Ascending aorta (tissue), 2 donors: ENCODE measurements at regions of chr3 and their contacts with region 1.

Region 1: DNA sequence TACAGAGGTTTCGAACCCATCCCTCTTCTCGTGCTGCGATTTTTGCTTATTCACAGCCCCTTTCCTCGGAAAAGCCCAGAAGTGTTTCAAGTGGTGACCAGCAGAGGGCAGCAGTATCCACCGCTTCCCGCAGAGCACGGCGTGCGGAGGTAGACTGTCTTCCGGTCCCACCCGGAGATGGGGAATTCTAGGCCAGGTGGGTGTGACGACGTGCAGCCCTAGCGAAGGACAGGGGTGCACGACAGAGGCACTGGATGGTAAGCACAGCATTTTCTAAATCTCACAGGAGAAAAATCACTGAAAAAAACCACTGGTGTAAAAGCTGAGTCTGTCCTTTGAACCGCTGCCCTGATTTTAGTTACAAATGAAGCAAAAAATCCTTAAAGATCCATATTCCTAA is 7.4 kb upstream of the PSMD6 start:
- DNase-seq: peak in 1 of 2 donors; percentile 76
- H3K4me3 ChIP-seq: peak overlapping the region; percentile 41 to 53
- H3K27ac ChIP-seq: no peak overlapping the region
- H3K4me1 ChIP-seq: no peaks in the 10 kb centered on the region
- H3K27me3 ChIP-seq: no peaks in the 10 kb centered on the region
- CTCF ChIP-seq: peak; percentile 86 to 91 (median 87)

Region 2: DNA sequence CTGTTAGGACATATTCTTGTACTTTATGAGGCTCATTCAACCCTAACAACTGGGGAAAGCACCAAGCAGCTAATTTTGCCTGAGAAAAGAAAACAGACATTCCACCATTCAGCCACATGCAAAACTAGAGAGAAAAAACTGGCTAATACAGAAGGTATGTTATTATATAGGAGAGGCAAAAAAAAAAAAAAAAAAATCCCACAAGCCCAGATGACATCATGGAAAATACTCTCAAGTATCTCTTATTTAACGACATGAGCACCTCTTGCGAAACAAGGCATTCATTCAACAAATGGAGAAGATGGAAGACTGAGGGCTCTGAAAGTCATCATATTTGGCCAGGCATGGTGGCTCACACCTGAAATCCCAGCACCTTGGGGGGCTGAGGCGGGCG is 133.0 kb after region 1 on chr3:
- intact Hi-C with region 1: loop called (anchors 2 kb)
- DNase-seq: no peak
- H3K4me3 ChIP-seq: no peak overlapping the region
- H3K27ac ChIP-seq: no peak overlapping the region
- H3K4me1 ChIP-seq: peaks cover 0 to 40% of the 10 kb centered on the region in 2 donors
- H3K27me3 ChIP-seq: no peaks in the 10 kb centered on the region
- CTCF ChIP-seq: no peak

Region 3: GRCh38 chr3:64484289-64484992 is 453.7 kb after region 1 on chr3:
- intact Hi-C with region 1: loop called (anchors 1 kb)
- DNase-seq: peak in 1 of 2 donors; percentile 82
- H3K4me3 ChIP-seq: no peak overlapping the region
- H3K27ac ChIP-seq: no peak overlapping the region
- H3K4me1 ChIP-seq: no peaks in the 10 kb centered on the region
- H3K27me3 ChIP-seq: no peaks in the 10 kb centered on the region
- CTCF ChIP-seq: peak; percentile 80 to 83 (median 83)